Naive thymus-derived CD4-positive, alpha-beta T cell (primary cell): ENCODE measurements at regions of chr7 and their contacts with region 1.

Region 1: GRCh38 chr7:12490117-12490688 is 80.3 kb upstream of the SCIN start:
- DNase-seq: peak in 3 of 9 donors; percentile 9 to 30 (median 19)
- ATAC-seq: peak; percentile 68
- H3K4me3 ChIP-seq: no peak overlapping the region
- H3K4me3 Mint-ChIP-seq: no peak overlapping the region
- H3K27ac ChIP-seq: no peak overlapping the region
- H3K27ac Mint-ChIP-seq: no peak overlapping the region
- H3K4me1 ChIP-seq: no peaks in the 10 kb centered on the region
- H3K4me1 Mint-ChIP-seq: no peaks in the 10 kb centered on the region
- H3K27me3 ChIP-seq: no peaks in the 10 kb centered on the region
- H3K27me3 Mint-ChIP-seq: peaks cover 4 to 14% (median 8%) of the 10 kb centered on the region in 5 donors

Region 2: GRCh38 chr7:11373546-11374142 is 1116.6 kb before region 1 on chr7:
- CTCF ChIA-PET with region 1: no interaction called
- POLR2A ChIA-PET with region 1: no interaction called
- intact Hi-C with region 1: loop called in 1 of 2 experiments (anchors 5 kb)
- DNase-seq: no peak
- ATAC-seq: no peak
- H3K4me3 ChIP-seq: no peak overlapping the region
- H3K4me3 Mint-ChIP-seq: no peak overlapping the region
- H3K27ac ChIP-seq: no peak overlapping the region
- H3K27ac Mint-ChIP-seq: no peak overlapping the region
- H3K4me1 ChIP-seq: no peaks in the 10 kb centered on the region
- H3K4me1 Mint-ChIP-seq: no peaks in the 10 kb centered on the region
- H3K27me3 ChIP-seq: no peaks in the 10 kb centered on the region
- H3K27me3 Mint-ChIP-seq: peaks cover 0 to 6% (median 0%) of the 10 kb centered on the region in 5 donors

Region 3: GRCh38 chr7:11831736-11832495 is 658.3 kb before region 1 on chr7 and contains the start of gene THSD7A:
- CTCF ChIA-PET with region 1: no interaction called
- POLR2A ChIA-PET with region 1: no interaction called
- intact Hi-C with region 1: loop called (anchors 5 to 10 kb)
- DNase-seq: peak in 2 of 9 donors; percentile 2 to 26
- ATAC-seq: peak; percentile 70
- H3K4me3 ChIP-seq: no peak within 1 kb of the TSS
- H3K4me3 Mint-ChIP-seq: peak within 1 kb of the TSS in 8 of 10 donors; percentile 20 to 47 (median 34)
- H3K27ac ChIP-seq: no peak within 1 kb of the TSS
- H3K27ac Mint-ChIP-seq: no peak within 1 kb of the TSS
- H3K4me1 ChIP-seq: no peaks in the 10 kb centered on the region
- H3K4me1 Mint-ChIP-seq: peaks cover 0 to 14% (median 9%) of the 10 kb centered on the region in 7 donors
- H3K27me3 ChIP-seq: peaks cover 0 to 4% of the 10 kb centered on the region in 2 donors
- H3K27me3 Mint-ChIP-seq: peaks cover 31 to 55% (median 36%) of the 10 kb centered on the region in 5 donors
- total RNA-seq, gene THSD7A: 1.2 to 1.3 TPM in 2 of 5 experiments, not detected in the others

Region 4: DNA sequence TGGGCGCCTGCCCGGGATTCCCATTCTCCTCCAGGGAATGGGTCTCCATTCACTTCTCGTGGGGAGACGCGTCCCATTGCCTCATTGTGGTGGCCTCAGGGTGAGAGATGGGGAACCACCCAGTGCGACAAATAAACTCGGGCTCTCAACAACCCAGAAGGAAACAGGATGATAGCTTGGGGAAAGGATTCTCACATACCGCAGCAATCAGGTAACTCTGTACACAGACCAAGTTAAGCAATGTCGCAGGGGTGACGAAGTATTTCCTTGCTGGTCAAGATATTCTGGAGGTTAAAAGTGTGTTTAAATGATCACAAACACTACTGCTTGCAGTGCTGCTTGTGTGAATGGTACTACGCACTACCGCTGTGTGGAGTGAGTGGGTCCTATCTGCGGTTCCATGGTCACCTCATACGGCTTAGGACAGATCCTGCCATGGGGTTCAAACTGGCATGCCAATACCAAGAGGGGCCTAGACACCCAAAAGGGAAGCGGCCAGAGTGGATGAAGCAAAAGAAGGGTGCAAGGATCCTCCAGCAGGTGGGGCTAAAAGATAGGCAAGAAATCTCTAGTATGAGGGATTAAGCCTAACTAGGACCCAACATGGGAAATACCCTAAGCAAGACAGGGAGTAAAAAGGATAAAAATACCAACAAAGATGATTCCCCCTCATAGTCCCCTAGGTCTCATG is 422.9 kb before region 1 on chr7:
- CTCF ChIA-PET with region 1: interaction called, 6 read pairs
- POLR2A ChIA-PET with region 1: no interaction called
- intact Hi-C with region 1: loop called (anchors 1 kb)
- DNase-seq: peak; percentile 15 to 69 (median 58)
- ATAC-seq: peak; percentile 72
- H3K4me3 ChIP-seq: no peak overlapping the region
- H3K4me3 Mint-ChIP-seq: no peak overlapping the region
- H3K27ac ChIP-seq: no peak overlapping the region
- H3K27ac Mint-ChIP-seq: peak overlapping the region in 1 of 9 donors; percentile 73
- H3K4me1 ChIP-seq: no peaks in the 10 kb centered on the region
- H3K4me1 Mint-ChIP-seq: peaks cover 0 to 5% (median 0%) of the 10 kb centered on the region in 7 donors
- H3K27me3 ChIP-seq: no peaks in the 10 kb centered on the region
- H3K27me3 Mint-ChIP-seq: no peaks in the 10 kb centered on the region

Region 5: GRCh38 chr7:12111422-12112405 is 378.5 kb before region 1 on chr7:
- CTCF ChIA-PET with region 1: no interaction called
- POLR2A ChIA-PET with region 1: no interaction called
- intact Hi-C with region 1: no loop called
- DNase-seq: peak in 6 of 9 donors; percentile 2 to 20 (median 8)
- ATAC-seq: peak; percentile 68
- H3K4me3 ChIP-seq: peak overlapping the region; percentile 20
- H3K4me3 Mint-ChIP-seq: peak overlapping the region; percentile 3 to 87 (median 77)
- H3K27ac ChIP-seq: no peak overlapping the region
- H3K27ac Mint-ChIP-seq: peak overlapping the region in 2 of 9 donors; percentile 3 to 49
- H3K4me1 ChIP-seq: no peaks in the 10 kb centered on the region
- H3K4me1 Mint-ChIP-seq: peaks cover 0 to 20% (median 13%) of the 10 kb centered on the region in 7 donors
- H3K27me3 ChIP-seq: no peaks in the 10 kb centered on the region
- H3K27me3 Mint-ChIP-seq: peaks cover 32 to 59% (median 34%) of the 10 kb centered on the region in 5 donors

Region 6: GRCh38 chr7:12389089-12389700 is 101.0 kb before region 1 on chr7:
- CTCF ChIA-PET with region 1: interaction called, 3 read pairs
- POLR2A ChIA-PET with region 1: no interaction called
- intact Hi-C with region 1: loop called (anchors 1 to 2 kb)
- DNase-seq: peak in 7 of 9 donors; percentile 7 to 47 (median 26)
- ATAC-seq: peak; percentile 81
- H3K4me3 ChIP-seq: no peak overlapping the region
- H3K4me3 Mint-ChIP-seq: no peak overlapping the region
- H3K27ac ChIP-seq: no peak overlapping the region
- H3K27ac Mint-ChIP-seq: no peak overlapping the region
- H3K4me1 ChIP-seq: no peaks in the 10 kb centered on the region
- H3K4me1 Mint-ChIP-seq: no peaks in the 10 kb centered on the region
- H3K27me3 ChIP-seq: no peaks in the 10 kb centered on the region
- H3K27me3 Mint-ChIP-seq: no peaks in the 10 kb centered on the region

Region 7: DNA sequence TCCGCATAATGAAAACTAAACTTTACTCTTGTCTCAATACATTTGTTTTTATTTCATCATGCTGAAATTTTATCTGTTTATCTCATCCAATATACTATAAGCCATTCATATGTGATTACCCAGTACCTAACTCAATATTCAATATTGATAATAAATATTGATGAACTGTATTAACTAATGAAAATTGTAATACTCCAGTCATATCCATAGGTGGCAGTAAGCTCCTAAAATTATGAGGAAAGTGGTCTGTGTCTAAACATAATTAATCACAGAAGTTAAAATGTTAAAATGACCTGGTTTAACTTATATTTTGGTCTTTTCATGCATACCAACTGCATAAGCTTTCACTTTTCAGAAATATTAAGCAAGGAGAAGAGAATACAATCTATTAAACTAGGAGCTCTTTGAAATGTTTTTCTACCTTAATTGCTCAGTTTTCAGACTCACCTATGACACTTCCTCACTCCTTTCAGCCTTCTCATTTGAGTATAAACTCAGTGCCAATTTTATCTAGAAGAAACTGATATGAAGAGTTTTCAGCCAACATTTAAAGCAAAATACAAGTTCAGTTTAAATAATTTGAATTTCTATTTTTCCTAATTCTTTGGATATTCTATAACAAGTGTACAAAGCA is 56.1 kb before region 1 on chr7:
- CTCF ChIA-PET with region 1: interaction called, 3 read pairs
- POLR2A ChIA-PET with region 1: no interaction called
- intact Hi-C with region 1: loop called (anchors 2 kb)
- DNase-seq: no peak
- ATAC-seq: no peak
- H3K4me3 ChIP-seq: no peak overlapping the region
- H3K4me3 Mint-ChIP-seq: no peak overlapping the region
- H3K27ac ChIP-seq: no peak overlapping the region
- H3K27ac Mint-ChIP-seq: no peak overlapping the region
- H3K4me1 ChIP-seq: no peaks in the 10 kb centered on the region
- H3K4me1 Mint-ChIP-seq: no peaks in the 10 kb centered on the region
- H3K27me3 ChIP-seq: no peaks in the 10 kb centered on the region
- H3K27me3 Mint-ChIP-seq: peaks cover 9 to 28% (median 13%) of the 10 kb centered on the region in 5 donors

Region 8: DNA sequence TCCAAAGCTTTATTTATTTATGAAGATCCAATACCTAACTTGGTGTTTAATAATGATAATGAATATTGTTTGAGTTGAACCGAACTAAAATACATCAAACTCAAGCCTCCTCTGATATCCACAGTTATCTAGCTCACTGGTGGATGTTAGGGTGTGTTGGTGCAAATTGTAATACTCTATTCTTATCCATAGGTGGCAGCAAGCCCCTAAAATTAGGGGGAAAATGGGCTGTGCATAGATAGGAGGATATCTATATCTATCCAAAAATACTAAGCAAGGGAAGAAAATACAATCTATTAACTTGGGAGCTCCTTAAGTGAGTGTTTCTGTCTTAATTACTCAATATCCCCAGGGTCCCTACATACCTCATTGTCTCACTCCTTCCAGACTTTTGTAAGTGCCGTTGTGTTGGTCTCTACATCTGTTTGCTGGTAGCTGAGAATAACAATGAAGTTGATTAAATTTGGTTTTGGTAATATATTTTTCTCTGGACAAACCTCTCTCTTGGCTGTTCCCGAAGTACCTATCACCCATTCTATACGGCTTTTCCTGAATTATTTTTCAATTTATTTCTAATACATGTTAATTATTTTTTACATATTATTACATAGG is 31.6 kb before region 1 on chr7:
- CTCF ChIA-PET with region 1: interaction called, 26 read pairs
- POLR2A ChIA-PET with region 1: no interaction called
- intact Hi-C with region 1: loop called (anchors 1 kb)
- DNase-seq: peak in 4 of 9 donors; percentile 1 to 18 (median 3)
- ATAC-seq: peak; percentile 77
- H3K4me3 ChIP-seq: no peak overlapping the region
- H3K4me3 Mint-ChIP-seq: no peak overlapping the region
- H3K27ac ChIP-seq: no peak overlapping the region
- H3K27ac Mint-ChIP-seq: no peak overlapping the region
- H3K4me1 ChIP-seq: no peaks in the 10 kb centered on the region
- H3K4me1 Mint-ChIP-seq: no peaks in the 10 kb centered on the region
- H3K27me3 ChIP-seq: no peaks in the 10 kb centered on the region
- H3K27me3 Mint-ChIP-seq: peaks cover 9 to 21% (median 12%) of the 10 kb centered on the region in 5 donors

Region 9: DNA sequence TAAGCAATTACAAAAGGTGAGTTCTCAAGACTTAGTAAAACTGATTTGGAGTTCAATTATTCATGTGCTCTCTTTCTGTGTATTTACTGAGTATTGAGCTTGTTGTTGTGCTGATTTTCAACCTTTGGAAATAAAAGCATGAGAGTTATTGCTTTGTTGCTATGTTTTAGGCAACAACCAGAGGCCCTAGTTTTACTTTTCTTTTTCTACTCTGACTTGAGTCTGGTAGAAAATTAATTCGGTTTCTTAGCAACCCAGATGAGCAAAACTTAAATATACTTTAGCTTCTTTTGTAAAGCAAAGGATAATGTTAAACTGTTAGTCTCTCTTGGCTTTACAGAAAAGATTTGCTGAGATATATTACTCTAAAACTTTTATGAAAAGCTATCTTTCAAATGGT is 13.9 kb after region 1 on chr7:
- CTCF ChIA-PET with region 1: no interaction called
- POLR2A ChIA-PET with region 1: no interaction called
- intact Hi-C with region 1: no loop called
- DNase-seq: no peak
- ATAC-seq: no peak
- H3K4me3 ChIP-seq: no peak overlapping the region
- H3K4me3 Mint-ChIP-seq: no peak overlapping the region
- H3K27ac ChIP-seq: no peak overlapping the region
- H3K27ac Mint-ChIP-seq: no peak overlapping the region
- H3K4me1 ChIP-seq: no peaks in the 10 kb centered on the region
- H3K4me1 Mint-ChIP-seq: no peaks in the 10 kb centered on the region
- H3K27me3 ChIP-seq: no peaks in the 10 kb centered on the region
- H3K27me3 Mint-ChIP-seq: peaks cover 0 to 1% (median 0%) of the 10 kb centered on the region in 5 donors